ENCODE measurements at regions of chr18 and their contacts with region 1.

Region 1: DNA sequence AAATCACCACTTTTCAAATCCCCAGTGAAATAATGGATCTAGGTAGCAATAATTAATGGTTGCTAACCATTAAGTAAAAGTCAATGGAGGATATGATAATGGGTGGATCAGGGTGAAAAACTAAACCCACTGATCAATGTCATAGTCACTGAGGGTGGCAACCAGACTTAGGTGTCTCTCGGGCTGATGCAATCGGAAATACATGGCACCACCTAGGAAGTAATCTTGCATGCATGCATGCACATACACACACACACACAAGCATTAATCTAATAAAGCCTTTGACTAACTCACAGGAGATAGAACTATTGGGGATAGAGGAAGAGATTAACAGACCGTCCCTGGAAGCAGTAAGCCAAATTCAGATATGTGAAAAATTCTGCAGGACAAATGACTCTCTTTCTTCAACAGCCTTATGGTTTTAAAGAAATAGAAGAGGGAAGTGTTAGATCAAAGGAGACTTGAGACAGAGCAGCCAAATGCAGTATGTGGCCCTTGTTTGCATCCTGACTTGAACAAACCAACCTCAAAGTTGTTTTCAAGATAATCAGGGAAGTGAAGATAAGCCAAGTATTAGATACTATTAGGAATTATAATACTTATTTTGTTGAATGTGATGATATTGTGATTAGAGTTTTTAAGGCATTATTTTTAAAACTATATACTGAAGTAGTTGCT is 186.0 kb upstream of the RMP24 start:
- DNase-seq: no peak
- H3K4me3 ChIP-seq: no peak overlapping the region
- H3K27ac ChIP-seq: no peak overlapping the region
- H3K4me1 ChIP-seq: no peaks in the 10 kb centered on the region
- H3K27me3 ChIP-seq: no peaks in the 10 kb centered on the region
- CTCF ChIP-seq: no peak
- POLR2A ChIP-seq: no peak

Region 2: GRCh38 chr18:36129300-36130038 is 343.0 kb after region 1 on chr18 and contains the starts of genes ELP2 and SLC39A6:
- intact Hi-C with region 1: loop called (anchors 5 kb)
- DNase-seq: peak in 1 of 2 donors; percentile 97
- H3K4me3 ChIP-seq: peak within 1 kb of the TSS; percentile 83 to 96
- H3K27ac ChIP-seq: peak within 1 kb of the TSS; percentile 97
- H3K4me1 ChIP-seq: peaks cover 58% of the 10 kb centered on the region
- H3K27me3 ChIP-seq: no peaks in the 10 kb centered on the region
- CTCF ChIP-seq: peak in 1 of 3 experiments; percentile 19
- POLR2A ChIP-seq: peak in 1 of 2 donors; percentile 67
- total RNA-seq, gene ELP2: 60.2 TPM
- total RNA-seq, gene SLC39A6: 39.3 TPM

Measured in vagina (tissue), 2 donors.